ENCODE measurements at regions of chr2 and their contacts with region 1.

Region 1: DNA sequence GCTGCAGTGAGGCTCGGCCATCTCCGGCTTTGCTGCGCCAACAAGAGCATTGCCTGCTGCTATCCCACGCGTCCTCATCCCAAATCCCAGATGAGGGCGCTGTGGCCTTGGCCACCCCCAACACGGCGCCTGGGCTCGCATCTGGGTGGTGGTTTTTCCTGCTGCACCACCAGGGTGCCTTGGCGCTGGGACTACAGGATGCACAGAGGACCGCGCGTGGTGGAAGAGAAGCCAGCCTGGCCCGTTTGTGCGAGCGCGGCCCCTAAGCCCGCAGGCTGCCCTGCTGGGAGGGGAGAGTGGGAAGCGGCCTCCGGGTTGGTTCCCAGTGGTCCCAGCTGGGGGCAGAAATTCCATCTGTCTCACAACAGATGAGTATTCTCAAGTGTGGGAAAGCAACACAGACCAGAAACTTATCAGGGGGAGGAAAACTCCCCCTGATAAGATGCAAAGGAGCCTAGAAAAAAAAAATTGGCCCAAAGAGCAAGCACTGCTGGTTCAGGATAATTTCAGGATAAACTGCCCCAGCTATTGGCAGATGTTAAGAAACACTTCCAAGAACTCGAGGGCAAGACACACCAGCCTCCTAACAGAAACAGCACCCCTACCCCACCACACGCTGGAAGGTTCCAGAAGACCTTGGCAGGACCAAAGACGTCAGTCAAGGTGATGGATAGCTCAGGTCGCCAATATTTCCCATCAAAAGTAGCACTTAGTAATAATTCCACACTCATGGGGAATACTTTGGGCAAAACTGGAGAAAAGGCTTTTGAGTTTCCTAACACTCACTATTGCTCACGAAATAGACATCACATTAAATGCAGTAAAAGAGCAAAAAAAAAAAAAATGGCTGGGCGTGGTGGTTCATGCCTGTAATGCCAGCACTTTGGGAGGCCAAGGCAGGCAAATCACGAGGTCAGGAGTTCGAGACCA is 152.1 kb downstream of the PXDN start:
- DNase-seq: no peak
- ATAC-seq: no peak
- H3K4me3 Mint-ChIP-seq: no peak overlapping the region
- H3K27ac Mint-ChIP-seq: no peak overlapping the region
- H3K4me1 Mint-ChIP-seq: peaks cover 2% of the 10 kb centered on the region
- H3K27me3 Mint-ChIP-seq: peaks cover 12% of the 10 kb centered on the region

Region 2: DNA sequence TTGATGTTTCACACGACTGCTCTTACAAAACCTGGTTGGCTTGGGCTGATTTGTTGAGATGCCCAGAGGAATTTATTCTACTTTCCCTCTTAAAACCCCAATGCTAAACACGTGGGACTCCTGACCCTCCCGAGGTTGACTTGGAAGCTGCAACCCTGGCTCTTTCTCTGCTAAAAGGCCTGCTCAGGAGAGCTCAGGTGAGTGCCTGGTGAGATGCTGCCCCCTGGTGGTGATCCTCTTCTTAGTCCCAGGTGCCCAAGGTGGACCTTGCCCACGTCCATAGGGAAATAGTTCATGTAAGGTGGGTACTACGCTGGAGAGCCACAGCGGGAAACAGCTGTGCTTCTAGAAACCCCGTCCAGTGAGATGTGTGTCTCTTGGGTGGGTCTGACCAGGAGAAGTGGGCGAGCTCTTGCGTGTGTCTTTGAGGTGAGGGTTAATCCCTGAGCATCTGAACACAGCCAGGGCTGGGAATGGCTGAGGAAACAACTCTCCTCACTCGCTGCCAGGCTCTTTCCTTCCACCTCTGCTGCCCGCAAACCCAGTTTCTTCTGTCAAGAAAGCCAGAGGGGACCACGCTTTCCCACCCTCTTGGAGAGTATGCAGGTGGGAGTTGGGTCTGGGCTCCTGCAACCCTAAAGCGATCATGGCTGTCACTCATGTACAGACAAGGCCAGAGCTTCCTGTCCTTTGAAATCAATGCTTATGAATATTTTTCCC is 177.6 kb after region 1 on chr2:
- CTCF ChIA-PET with region 1: no interaction called
- POLR2A ChIA-PET with region 1: no interaction called
- intact Hi-C with region 1: loop called in 1 of 2 experiments (anchors 5 kb)
- DNase-seq: peak; percentile 78
- ATAC-seq: no peak
- H3K4me3 Mint-ChIP-seq: no peak overlapping the region
- H3K27ac Mint-ChIP-seq: no peak overlapping the region
- H3K4me1 Mint-ChIP-seq: no peaks in the 10 kb centered on the region
- H3K27me3 Mint-ChIP-seq: no peaks in the 10 kb centered on the region